Lower leg skin (tissue), 4 donors: ENCODE measurements at regions of chr13 and their contacts with region 1.

Region 1: GRCh38 chr13:36839276-36840026 is 20.4 kb downstream of the RFXAP start:
- DNase-seq: no peak
- H3K4me3 ChIP-seq: no peak overlapping the region
- CTCF ChIP-seq: no peak
- POLR2A ChIP-seq: no peak

Region 2: GRCh38 chr13:37923236-37923635 is 1083.8 kb after region 1 on chr13:
- intact Hi-C with region 1: loop called (anchors 5 kb)
- DNase-seq: no peak
- H3K4me3 ChIP-seq: no peak overlapping the region
- CTCF ChIP-seq: no peak
- POLR2A ChIP-seq: no peak